MCF 10A (cell line): ENCODE measurements at regions of chr11 and their contacts with region 1.

Region 1: DNA sequence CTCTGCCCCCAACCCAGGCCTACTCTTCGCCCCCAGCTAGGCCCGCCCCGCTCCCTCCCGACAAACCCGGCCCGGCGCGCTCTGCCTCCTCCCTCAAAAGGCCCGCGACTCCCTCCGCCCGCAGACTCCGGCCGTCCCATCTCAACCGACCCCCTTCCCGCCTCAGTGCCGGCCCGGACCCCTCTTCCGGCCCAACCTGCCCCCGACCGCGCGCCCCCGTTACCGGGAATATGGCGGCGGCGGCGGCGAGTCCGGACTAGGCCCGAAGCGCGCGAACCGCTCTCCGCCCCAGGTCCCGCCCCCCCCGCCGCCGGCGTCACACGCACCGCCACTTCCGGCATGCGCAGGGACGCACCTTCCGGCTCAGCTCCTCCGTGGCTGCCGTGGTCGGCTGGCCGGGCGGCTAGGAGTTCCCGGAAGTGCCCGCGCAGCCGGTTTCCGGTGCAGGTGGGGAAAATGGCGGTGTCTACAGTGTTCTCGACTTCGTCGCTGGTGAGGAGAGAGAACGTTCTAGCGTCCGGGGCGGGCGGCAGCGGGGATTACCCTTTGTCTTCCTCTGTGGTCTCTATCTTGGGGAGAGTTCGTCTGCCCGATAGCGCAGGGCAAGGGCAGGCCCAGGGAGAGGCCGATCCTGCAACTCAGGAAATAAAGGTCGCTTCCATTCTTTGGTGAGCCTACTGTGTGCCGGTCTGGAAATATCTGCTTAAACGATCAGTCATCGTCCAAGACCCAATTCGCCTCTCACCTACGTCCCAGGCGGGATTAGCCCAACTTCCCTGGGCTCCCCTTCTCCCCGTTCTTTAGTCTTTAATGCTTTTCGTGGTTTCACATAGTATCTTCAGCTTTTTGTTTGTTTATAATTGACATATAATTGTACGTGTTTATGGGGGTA is at the starts of genes CPSF7 and SDHAF2:
- DNase-seq: peak; percentile 93
- H3K4me3 Mint-ChIP-seq: peak within 1 kb of the TSS; percentile 98
- H3K27ac Mint-ChIP-seq: peak within 1 kb of the TSS; percentile 99
- H3K4me1 Mint-ChIP-seq: no peaks in the 10 kb centered on the region
- H3K27me3 Mint-ChIP-seq: no peaks in the 10 kb centered on the region
- CTCF ChIP-seq: no peak
- total RNA-seq, gene CPSF7: 99.9 and 111 TPM in 2 replicates
- total RNA-seq, gene SDHAF2: 30.1 and 34.6 TPM in 2 replicates

Region 2: GRCh38 chr11:61181489-61181888 is 248.4 kb before region 1 on chr11:
- CTCF ChIA-PET with region 1: no interaction called
- POLR2A ChIA-PET with region 1: no interaction called
- intact Hi-C with region 1: no loop called
- DNase-seq: no peak
- H3K4me3 Mint-ChIP-seq: no peak overlapping the region
- H3K27ac Mint-ChIP-seq: no peak overlapping the region
- H3K4me1 Mint-ChIP-seq: no peaks in the 10 kb centered on the region
- H3K27me3 Mint-ChIP-seq: peaks cover 20% of the 10 kb centered on the region
- CTCF ChIP-seq: no peak

Region 3: GRCh38 chr11:61193596-61193995 is 236.3 kb before region 1 on chr11:
- CTCF ChIA-PET with region 1: no interaction called
- POLR2A ChIA-PET with region 1: no interaction called
- intact Hi-C with region 1: no loop called
- DNase-seq: no peak
- H3K4me3 Mint-ChIP-seq: no peak overlapping the region
- H3K27ac Mint-ChIP-seq: no peak overlapping the region
- H3K4me1 Mint-ChIP-seq: no peaks in the 10 kb centered on the region
- H3K27me3 Mint-ChIP-seq: peaks cover 43% of the 10 kb centered on the region
- CTCF ChIP-seq: no peak

Region 4: GRCh38 chr11:61361686-61362541 is 68.0 kb before region 1 on chr11 and contains the starts of genes CYB561A3 and TMEM138:
- CTCF ChIA-PET with region 1: interaction called, 6 read pairs
- POLR2A ChIA-PET with region 1: interaction called, 19 read pairs
- intact Hi-C with region 1: no loop called
- DNase-seq: peak; percentile 92
- H3K4me3 Mint-ChIP-seq: peak within 1 kb of the TSS; percentile 93
- H3K27ac Mint-ChIP-seq: peak within 1 kb of the TSS; percentile 94
- H3K4me1 Mint-ChIP-seq: peaks cover 19% of the 10 kb centered on the region
- H3K27me3 Mint-ChIP-seq: no peaks in the 10 kb centered on the region
- CTCF ChIP-seq: no peak
- total RNA-seq, gene CYB561A3: 28.4 and 28.8 TPM in 2 replicates
- total RNA-seq, gene TMEM138: 39.9 and 46.5 TPM in 2 replicates

Region 5: DNA sequence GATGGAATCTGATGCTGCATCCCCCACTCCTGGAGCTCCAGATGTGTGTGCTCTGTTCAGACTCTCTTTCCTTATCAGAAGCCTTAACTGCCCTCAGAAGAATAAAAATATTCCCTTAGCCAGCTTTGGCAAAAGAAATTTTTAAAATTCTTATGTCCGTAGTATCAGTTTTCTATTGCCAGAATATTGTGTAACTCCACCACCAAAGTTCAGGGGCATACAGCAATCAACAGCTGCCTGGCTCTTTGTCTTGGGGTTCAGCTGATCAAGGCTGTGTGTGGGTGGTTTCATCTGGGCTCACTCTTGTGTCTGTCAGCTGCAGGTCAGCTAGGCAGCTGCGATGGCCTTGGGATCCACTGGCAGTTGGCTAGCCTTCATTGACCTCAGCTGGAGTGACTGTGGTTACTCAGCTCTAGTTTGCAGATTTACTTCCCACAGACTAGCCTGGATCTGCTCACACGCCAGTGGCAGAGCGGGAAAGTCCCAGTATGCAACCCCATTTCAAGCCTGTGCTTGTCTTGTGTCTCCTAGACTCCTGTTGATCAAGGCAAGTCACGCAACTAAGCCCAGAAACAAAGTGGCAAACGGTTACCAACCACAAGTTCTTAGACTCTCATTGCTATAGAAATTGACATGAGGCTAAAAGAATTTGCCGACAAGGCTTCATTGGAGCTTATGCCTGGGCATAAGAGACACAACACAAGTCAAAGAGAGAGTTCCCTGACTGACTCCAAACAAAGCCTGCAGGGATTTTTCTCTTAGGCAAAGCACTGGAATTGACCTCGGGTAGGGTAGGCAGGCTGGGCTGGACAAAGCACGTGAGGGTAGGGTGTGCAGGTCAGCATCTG is 60.3 kb before region 1 on chr11:
- CTCF ChIA-PET with region 1: interaction called, 3 read pairs
- POLR2A ChIA-PET with region 1: interaction called, 10 read pairs
- intact Hi-C with region 1: no loop called
- DNase-seq: peak; percentile 96
- H3K4me3 Mint-ChIP-seq: peak overlapping the region; percentile 41
- H3K27ac Mint-ChIP-seq: peak overlapping the region; percentile 99
- H3K4me1 Mint-ChIP-seq: peaks cover 22% of the 10 kb centered on the region
- H3K27me3 Mint-ChIP-seq: no peaks in the 10 kb centered on the region
- CTCF ChIP-seq: no peak

Region 6: GRCh38 chr11:61392981-61393595 is 36.8 kb before region 1 on chr11:
- CTCF ChIA-PET with region 1: interaction called, 10 read pairs
- POLR2A ChIA-PET with region 1: interaction called, 8 read pairs
- intact Hi-C with region 1: no loop called
- DNase-seq: no peak
- H3K4me3 Mint-ChIP-seq: peak overlapping the region; percentile 66
- H3K27ac Mint-ChIP-seq: peak overlapping the region; percentile 54
- H3K4me1 Mint-ChIP-seq: no peaks in the 10 kb centered on the region
- H3K27me3 Mint-ChIP-seq: peaks cover 20% of the 10 kb centered on the region
- CTCF ChIP-seq: no peak

Region 7: DNA sequence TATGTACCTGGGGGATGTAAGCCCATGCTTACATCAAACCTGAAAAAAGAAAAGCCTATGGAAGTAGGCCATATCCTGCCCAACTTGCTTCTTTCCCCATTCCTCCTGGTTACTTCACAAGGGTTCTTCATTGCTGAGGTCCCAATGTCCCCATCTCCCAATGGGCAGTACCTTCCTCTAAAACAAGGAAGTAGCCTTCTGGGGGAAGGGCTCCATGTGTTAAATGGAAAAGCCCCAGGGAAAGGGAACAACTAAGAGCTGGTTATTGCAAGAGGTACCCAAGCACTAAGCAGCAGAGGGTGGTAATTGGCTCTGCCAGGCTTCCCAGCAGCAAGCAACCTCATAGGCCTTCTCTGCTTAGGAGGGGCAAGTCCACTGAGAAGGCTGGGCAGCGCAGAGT is 26.3 kb before region 1 on chr11:
- CTCF ChIA-PET with region 1: interaction called, 5 read pairs
- POLR2A ChIA-PET with region 1: interaction called, 15 read pairs
- intact Hi-C with region 1: no loop called
- DNase-seq: no peak
- H3K4me3 Mint-ChIP-seq: no peak overlapping the region
- H3K27ac Mint-ChIP-seq: no peak overlapping the region
- H3K4me1 Mint-ChIP-seq: no peaks in the 10 kb centered on the region
- H3K27me3 Mint-ChIP-seq: no peaks in the 10 kb centered on the region
- CTCF ChIP-seq: no peak

Region 8: DNA sequence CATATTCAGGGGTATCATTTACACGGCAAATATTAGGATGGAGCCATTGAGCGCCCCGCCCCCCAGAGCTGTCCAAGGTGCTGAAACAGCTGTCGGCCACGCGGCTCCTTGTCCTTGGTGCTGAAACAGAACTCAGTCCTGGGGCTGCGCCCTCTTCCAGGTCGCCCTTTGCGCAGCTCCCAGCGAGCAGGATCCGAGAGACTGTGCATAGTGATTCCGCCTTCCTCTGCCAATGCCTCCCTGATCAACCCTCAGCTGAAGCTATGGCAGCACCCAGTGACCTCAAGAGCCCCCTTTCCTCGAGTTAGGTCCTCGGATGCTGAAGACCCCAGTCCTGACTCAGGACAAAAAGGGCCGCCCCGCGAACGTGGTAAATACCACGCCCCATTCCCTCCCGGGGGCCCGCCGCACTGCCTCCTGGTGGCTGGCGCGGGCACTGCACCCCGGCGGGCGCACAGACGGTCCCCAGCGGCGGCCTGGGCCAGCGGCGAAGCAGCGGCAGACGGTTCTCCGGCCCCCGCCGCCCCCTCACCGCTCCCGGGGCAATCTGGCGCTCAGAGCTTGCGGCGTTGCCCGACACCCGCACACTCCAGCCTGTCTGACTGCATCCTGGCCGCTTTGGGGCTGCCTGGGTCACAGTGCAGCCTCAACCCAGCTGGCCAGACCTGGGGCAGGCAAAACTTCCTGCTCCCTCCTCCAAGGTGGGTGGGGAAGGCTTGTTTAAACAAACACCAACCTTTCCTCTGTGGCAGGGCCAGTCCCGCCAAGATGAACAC is 137.5 kb after region 1 on chr11:
- CTCF ChIA-PET with region 1: no interaction called
- POLR2A ChIA-PET with region 1: no interaction called
- intact Hi-C with region 1: no loop called
- DNase-seq: peak; percentile 78
- H3K4me3 Mint-ChIP-seq: no peak overlapping the region
- H3K27ac Mint-ChIP-seq: no peak overlapping the region
- H3K4me1 Mint-ChIP-seq: no peaks in the 10 kb centered on the region
- H3K27me3 Mint-ChIP-seq: peaks cover 13% of the 10 kb centered on the region
- CTCF ChIP-seq: peak; percentile 53

Region 9: GRCh38 chr11:61627567-61628445 is 197.9 kb after region 1 on chr11:
- CTCF ChIA-PET with region 1: interaction called, 10 read pairs
- POLR2A ChIA-PET with region 1: interaction called, 3 read pairs
- intact Hi-C with region 1: no loop called
- DNase-seq: peak; percentile 75
- H3K4me3 Mint-ChIP-seq: no peak overlapping the region
- H3K27ac Mint-ChIP-seq: peak overlapping the region; percentile 54
- H3K4me1 Mint-ChIP-seq: peaks cover 12% of the 10 kb centered on the region
- H3K27me3 Mint-ChIP-seq: no peaks in the 10 kb centered on the region
- CTCF ChIP-seq: peak; percentile 94

Region 10: DNA sequence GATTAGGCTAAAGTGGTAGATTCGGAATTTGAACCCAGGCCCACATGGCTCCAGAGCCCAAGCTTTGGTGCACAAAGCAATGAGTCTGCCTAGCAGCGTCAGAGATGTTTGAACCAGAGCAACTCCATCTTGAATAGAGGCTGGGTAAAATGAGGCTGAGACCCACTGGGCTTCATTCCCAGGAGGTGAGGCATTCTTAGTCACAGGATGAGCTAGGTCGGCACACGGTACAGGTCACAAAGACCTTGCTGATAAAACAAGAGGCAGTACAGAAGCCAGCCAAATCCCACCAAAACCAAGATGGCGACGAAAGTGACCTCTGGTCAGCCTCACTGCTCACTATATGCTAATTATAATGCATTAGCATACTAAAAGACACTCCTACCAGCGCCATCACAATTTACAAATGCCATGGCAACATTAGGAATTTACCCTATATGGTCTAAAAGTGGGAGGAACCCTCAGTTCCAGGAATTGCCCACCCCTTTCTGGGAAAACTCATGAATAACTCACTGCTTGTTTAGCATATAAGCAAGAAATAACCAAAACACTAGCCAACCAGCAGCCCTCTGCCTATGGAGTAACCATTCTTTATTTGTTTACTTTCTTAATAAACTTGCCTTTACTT is 210.0 kb after region 1 on chr11:
- CTCF ChIA-PET with region 1: interaction called, 10 read pairs
- POLR2A ChIA-PET with region 1: interaction called, 4 read pairs
- intact Hi-C with region 1: no loop called
- DNase-seq: no peak
- H3K4me3 Mint-ChIP-seq: no peak overlapping the region
- H3K27ac Mint-ChIP-seq: no peak overlapping the region
- H3K4me1 Mint-ChIP-seq: no peaks in the 10 kb centered on the region
- H3K27me3 Mint-ChIP-seq: peaks cover 27% of the 10 kb centered on the region
- CTCF ChIP-seq: no peak

Region 11: GRCh38 chr11:62461740-62462507 is 1032.0 kb after region 1 on chr11:
- CTCF ChIA-PET with region 1: no interaction called
- POLR2A ChIA-PET with region 1: no interaction called
- intact Hi-C with region 1: no loop called
- DNase-seq: peak; percentile 18
- H3K4me3 Mint-ChIP-seq: no peak overlapping the region
- H3K27ac Mint-ChIP-seq: no peak overlapping the region
- H3K4me1 Mint-ChIP-seq: no peaks in the 10 kb centered on the region
- H3K27me3 Mint-ChIP-seq: no peaks in the 10 kb centered on the region
- CTCF ChIP-seq: no peak